ENCODE measurements at regions of chr4 and their contacts with region 1.

Region 1: DNA sequence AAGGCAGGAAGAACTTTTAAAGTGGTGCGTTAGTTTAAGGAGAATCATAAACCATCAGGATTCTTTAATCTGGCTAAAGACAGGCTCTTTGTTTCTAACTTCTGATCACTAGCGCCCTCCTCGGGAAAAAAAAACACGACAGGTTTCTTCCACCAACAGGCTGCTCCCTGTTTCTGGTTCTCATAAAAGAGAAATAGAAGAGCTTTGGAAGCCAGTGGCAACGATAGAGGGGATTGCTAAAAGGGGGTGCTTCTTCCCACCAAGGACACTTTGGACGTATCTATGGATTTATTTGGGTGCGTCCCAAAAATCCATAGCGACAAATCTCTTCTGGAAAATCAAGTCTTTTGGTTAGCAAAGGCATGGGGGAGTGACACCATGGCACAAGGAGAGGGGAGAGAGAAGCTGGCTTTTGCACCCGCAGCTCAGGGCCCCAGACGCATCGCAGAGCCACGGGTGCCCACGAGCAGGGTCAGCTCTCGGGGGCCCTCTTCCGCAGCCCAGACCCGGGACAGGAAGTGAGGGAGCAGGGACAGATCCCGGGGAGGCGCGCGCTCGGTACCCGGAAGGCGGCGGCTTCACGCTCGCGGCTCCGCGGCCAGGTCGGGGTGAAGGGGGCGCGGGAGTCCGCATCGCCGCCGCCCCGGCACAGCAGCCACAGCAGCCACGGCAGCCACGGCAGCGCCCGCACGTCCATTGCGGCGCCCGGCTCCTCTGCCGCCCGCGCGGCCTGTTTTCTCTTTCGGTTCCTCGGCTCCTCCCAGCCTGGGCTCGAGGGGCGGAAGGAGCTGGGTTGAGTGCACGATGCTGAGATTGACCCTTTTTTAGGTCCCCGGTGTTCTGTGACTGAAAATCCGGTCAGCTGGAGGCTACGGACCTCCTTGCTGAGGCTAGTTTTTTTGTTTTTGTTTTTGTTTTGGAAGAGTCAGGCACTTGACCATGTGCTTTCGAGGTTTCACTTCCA is at the start of gene CTSO:
- DNase-seq: peak; percentile 64
- H3K4me3 ChIP-seq: peak within 1 kb of the TSS; percentile 74
- H3K27ac ChIP-seq: peak within 1 kb of the TSS; percentile 95
- H3K27me3 ChIP-seq: no peaks in the 10 kb centered on the region
- CTCF ChIP-seq: peak; percentile 69
- polyA plus RNA-seq, gene CTSO: 19.0 and 24.0 TPM in 2 replicates

Region 2: GRCh38 chr4:155442267-155443105 is 510.9 kb before region 1 on chr4:
- CTCF ChIA-PET with region 1: interaction called, 16 read pairs
- POLR2A ChIA-PET with region 1: no interaction called
- DNase-seq: no peak
- H3K4me3 ChIP-seq: no peak overlapping the region
- H3K27ac ChIP-seq: no peak overlapping the region
- H3K27me3 ChIP-seq: no peaks in the 10 kb centered on the region
- CTCF ChIP-seq: peak; percentile 99

Region 3: DNA sequence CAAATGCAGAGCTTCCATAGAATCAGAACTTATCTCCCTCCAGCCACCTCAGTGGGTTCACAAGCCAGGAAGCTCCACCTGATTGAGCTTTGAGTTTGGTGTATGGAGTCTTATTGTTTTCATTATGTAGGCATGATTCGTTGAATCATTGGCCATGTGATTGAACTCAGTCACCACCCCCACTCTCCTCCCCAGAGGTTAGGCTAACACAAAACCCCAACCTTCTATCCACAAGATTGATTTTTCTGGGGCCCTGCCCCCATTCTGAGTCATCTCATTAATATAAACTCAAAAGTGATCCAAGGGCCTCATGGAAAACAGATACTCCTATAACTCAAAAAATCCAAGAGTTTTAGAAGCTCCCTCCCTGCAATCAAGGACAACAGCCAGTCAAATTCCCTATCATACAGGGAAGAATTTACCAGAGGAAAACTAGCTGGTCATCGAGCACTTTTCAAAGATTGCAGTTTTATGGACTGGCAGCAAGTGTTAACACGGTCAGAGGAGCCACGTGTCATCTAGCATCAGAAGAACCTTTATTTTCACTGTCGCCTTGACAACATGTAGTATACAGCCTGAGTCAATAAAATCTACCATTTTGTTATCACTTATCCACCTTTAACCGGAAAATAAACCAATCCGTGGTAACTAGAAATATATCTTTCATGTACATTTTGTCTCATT is 230.5 kb before region 1 on chr4:
- CTCF ChIA-PET with region 1: no interaction called
- POLR2A ChIA-PET with region 1: no interaction called
- DNase-seq: peak; percentile 50
- H3K4me3 ChIP-seq: no peak overlapping the region
- H3K27ac ChIP-seq: no peak overlapping the region
- H3K27me3 ChIP-seq: no peaks in the 10 kb centered on the region
- CTCF ChIP-seq: no peak

Region 4: DNA sequence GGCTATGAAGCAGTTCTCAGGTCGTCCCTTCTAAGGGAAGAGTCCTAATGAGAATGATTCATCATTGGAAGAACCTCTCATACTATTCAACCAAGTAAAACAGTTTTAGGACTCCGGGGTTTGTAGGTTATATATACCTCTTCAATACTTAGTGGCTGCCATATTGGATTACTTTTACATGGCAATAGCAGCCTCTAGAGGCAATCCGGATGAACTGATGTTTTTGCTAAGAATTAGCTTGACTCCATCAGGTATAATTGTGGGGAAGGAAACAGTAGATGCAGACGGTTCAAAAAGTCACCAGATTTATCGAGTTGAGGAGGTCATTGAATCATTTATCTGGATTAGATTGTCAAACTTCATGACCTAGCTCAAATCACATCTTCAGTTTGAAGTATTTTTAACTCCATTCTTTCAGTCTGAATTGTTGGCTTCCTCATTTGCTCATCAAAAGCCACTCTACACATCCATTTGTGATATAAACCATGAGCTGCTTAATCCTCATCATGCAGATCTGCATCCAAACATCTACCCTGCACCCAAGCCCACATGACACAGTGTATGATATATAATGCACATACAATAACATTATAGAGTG is 166.2 kb before region 1 on chr4:
- CTCF ChIA-PET with region 1: interaction called, 12 read pairs
- POLR2A ChIA-PET with region 1: no interaction called
- DNase-seq: no peak
- H3K4me3 ChIP-seq: no peak overlapping the region
- H3K27ac ChIP-seq: no peak overlapping the region
- H3K27me3 ChIP-seq: no peaks in the 10 kb centered on the region
- CTCF ChIP-seq: peak; percentile 91

Region 5: DNA sequence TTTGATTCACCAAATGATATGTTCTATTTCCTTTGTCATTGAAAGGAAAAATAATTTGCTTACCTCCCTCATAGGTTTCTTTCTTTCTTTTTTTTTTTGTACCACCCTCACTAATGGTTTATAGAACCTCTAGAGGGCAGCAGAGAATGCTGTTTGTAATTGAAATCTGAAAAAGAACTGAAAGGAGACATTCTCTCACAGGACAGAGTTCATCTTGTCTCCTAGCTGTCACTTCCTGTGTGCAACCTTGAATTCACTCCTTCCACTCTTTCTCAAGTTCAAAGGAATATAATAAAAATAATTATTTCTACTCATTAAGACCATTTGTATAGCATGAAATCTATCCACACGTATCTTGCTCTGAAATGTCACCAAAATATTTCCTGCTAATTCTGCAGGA is 143.6 kb before region 1 on chr4:
- CTCF ChIA-PET with region 1: interaction called, 173 read pairs
- POLR2A ChIA-PET with region 1: interaction called, 9 read pairs
- DNase-seq: peak; percentile 70
- H3K4me3 ChIP-seq: no peak overlapping the region
- H3K27ac ChIP-seq: no peak overlapping the region
- H3K27me3 ChIP-seq: no peaks in the 10 kb centered on the region
- CTCF ChIP-seq: peak; percentile 74

Region 6: DNA sequence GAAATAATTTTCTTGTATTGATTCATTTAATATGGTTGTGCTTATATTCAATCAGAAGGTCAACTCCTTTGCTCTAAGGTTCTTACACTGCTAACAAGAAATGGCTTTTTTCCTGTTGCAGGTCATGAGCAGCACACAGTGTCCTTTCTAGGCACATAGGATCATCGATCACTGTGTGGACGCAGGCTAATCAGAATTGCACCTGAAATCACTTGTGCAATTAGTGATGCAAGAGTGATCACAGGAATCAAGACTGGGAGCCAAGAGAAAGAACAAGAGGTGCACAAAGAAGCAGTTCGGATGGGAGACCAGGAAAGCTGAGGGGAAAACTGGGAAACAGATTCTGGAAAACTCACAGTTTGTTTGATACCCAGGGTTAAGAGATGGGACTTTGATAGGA is 28.8 kb before region 1 on chr4:
- CTCF ChIA-PET with region 1: no interaction called
- POLR2A ChIA-PET with region 1: no interaction called
- DNase-seq: no peak
- H3K4me3 ChIP-seq: no peak overlapping the region
- H3K27ac ChIP-seq: no peak overlapping the region
- H3K27me3 ChIP-seq: no peaks in the 10 kb centered on the region
- CTCF ChIP-seq: no peak

Region 7: DNA sequence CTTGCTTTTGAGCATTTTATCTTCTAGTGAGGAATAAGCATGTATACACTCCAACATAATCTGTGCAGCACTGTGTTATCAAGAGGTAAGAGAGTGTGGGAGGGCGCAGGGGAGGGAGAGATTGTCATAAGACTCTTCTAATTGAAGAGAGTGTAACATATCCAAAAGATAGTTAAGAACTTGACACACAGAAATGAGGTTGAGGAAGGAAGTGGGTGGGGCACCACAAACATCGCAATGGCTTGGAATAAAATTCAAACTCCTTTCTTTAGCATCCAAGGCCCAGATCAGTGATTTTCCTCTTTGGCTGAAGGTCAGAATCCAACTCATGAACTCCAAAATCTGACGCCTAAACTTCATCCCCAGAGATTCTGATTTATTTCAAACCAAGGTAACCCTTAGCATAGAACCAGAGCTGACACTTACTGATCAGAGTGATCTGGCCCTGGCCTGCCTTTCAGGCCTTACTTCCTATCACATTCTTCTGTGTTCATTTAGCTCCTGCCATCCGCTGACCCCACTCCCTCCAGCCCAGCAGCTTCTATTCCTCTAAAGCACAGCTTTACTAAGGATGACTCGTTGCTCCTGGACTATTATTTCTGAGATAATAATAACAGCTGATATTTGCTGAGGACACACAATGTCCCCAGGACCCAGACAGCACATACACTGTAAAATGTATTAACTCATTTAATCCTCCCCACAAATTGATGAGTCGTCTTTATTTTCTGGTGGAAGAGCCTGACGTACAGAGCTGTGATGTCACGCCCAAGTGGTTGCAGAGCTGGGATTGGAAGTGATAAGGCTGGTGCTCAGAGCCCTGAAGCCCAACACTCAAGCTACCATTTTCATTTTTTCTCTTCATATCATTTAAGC is 10.8 kb after region 1 on chr4:
- CTCF ChIA-PET with region 1: interaction called, 12 read pairs
- POLR2A ChIA-PET with region 1: no interaction called
- DNase-seq: no peak
- H3K4me3 ChIP-seq: no peak overlapping the region
- H3K27ac ChIP-seq: no peak overlapping the region
- H3K27me3 ChIP-seq: no peaks in the 10 kb centered on the region
- CTCF ChIP-seq: no peak

Measured in AG04450 (cell line).